Caco-2 (cell line): ENCODE measurements at regions of chr9 and their contacts with region 1.

Region 1: GRCh38 chr9:106288689-106289088 is 574.3 kb upstream of the ZNF462 start:
- DNase-seq: no peak
- H3K4me3 ChIP-seq: no peak overlapping the region
- H3K4me3 Mint-ChIP-seq: no peak overlapping the region
- H3K27ac Mint-ChIP-seq: no peak overlapping the region
- H3K4me1 ChIP-seq: no peaks in the 10 kb centered on the region
- H3K4me1 Mint-ChIP-seq: peaks cover 6% of the 10 kb centered on the region
- H3K27me3 ChIP-seq: no peaks in the 10 kb centered on the region
- H3K27me3 Mint-ChIP-seq: no peaks in the 10 kb centered on the region
- CTCF ChIP-seq: no peak

Region 2: GRCh38 chr9:106305428-106306133 is 16.9 kb after region 1 on chr9:
- CTCF ChIA-PET with region 1: no interaction called
- POLR2A ChIA-PET with region 1: no interaction called
- intact Hi-C with region 1: no loop called
- DNase-seq: no peak
- H3K4me3 ChIP-seq: no peak overlapping the region
- H3K4me3 Mint-ChIP-seq: no peak overlapping the region
- H3K27ac Mint-ChIP-seq: no peak overlapping the region
- H3K4me1 ChIP-seq: no peaks in the 10 kb centered on the region
- H3K4me1 Mint-ChIP-seq: no peaks in the 10 kb centered on the region
- H3K27me3 ChIP-seq: no peaks in the 10 kb centered on the region
- H3K27me3 Mint-ChIP-seq: no peaks in the 10 kb centered on the region
- CTCF ChIP-seq: no peak

Region 3: GRCh38 chr9:106333530-106333929 is 44.8 kb after region 1 on chr9:
- CTCF ChIA-PET with region 1: no interaction called
- POLR2A ChIA-PET with region 1: no interaction called
- intact Hi-C with region 1: loop called (anchors 1 kb)
- DNase-seq: no peak
- H3K4me3 ChIP-seq: no peak overlapping the region
- H3K4me3 Mint-ChIP-seq: no peak overlapping the region
- H3K27ac Mint-ChIP-seq: no peak overlapping the region
- H3K4me1 ChIP-seq: peaks cover 13% of the 10 kb centered on the region
- H3K4me1 Mint-ChIP-seq: peaks cover 11% of the 10 kb centered on the region
- H3K27me3 ChIP-seq: no peaks in the 10 kb centered on the region
- H3K27me3 Mint-ChIP-seq: no peaks in the 10 kb centered on the region
- CTCF ChIP-seq: no peak